ENCODE measurements at regions of chr1 and their contacts with region 1.

Region 1: GRCh38 chr1:239587066-239587465 is 200.7 kb downstream of the CHRM3 start:
- DNase-seq: peak in 32 of 35 experiments; percentile 7 to 63 (median 27)
- ATAC-seq: peak; percentile 77 to 99 (median 92)
- H3K4me3 ChIP-seq: no peak overlapping the region
- H3K4me3 Mint-ChIP-seq: no peak overlapping the region
- H3K27ac ChIP-seq: no peak overlapping the region
- H3K27ac Mint-ChIP-seq: peak overlapping the region in 1 of 2 donors; percentile 73
- H3K4me1 ChIP-seq: peaks cover 0 to 6% of the 10 kb centered on the region in 2 experiments
- H3K4me1 Mint-ChIP-seq: peaks cover 11 to 15% (median 13%) of the 10 kb centered on the region in 3 donors
- H3K27me3 ChIP-seq: no peaks in the 10 kb centered on the region
- H3K27me3 Mint-ChIP-seq: peaks cover 3 to 7% of the 10 kb centered on the region in 2 donors

Region 2: DNA sequence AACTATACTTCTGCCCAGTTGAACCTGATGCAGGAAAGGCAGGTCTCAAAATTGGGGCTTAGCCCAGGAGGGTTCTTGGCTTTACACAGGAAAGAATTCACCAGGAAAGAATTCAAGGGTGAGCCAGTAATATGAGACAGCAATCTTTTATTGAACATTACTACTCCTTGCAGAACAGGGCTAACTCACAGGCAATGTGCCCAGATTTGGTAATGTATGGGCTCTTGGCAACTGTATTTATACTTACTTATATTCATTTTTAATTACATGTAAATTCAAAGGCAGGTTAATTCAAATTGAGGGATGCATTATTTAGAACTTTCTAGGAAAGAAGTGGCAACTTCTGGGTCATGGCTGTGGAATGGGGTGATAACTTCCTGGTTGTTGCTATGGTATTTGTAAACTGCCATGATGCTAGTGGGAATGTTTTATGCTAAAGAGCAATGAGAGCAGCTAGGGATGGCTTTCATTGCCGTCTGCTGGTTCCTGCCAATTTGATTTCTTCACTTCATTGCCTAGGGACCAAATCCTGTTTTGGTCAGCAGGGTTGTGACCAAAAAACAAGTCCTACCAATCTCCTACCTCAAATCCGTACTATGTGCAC is 93.2 kb before region 1 on chr1:
- CTCF ChIA-PET with region 1: no interaction called
- POLR2A ChIA-PET with region 1: no interaction called
- DNase-seq: no peak
- ATAC-seq: no peak
- H3K4me3 ChIP-seq: no peak overlapping the region
- H3K4me3 Mint-ChIP-seq: no peak overlapping the region
- H3K27ac ChIP-seq: no peak overlapping the region
- H3K27ac Mint-ChIP-seq: no peak overlapping the region
- H3K4me1 ChIP-seq: no peaks in the 10 kb centered on the region
- H3K4me1 Mint-ChIP-seq: no peaks in the 10 kb centered on the region
- H3K27me3 ChIP-seq: no peaks in the 10 kb centered on the region
- H3K27me3 Mint-ChIP-seq: no peaks in the 10 kb centered on the region

Region 3: GRCh38 chr1:239619190-239619589 is 32.1 kb after region 1 on chr1:
- CTCF ChIA-PET with region 1: no interaction called
- POLR2A ChIA-PET with region 1: no interaction called
- DNase-seq: no peak
- ATAC-seq: no peak
- H3K4me3 ChIP-seq: no peak overlapping the region
- H3K4me3 Mint-ChIP-seq: no peak overlapping the region
- H3K27ac ChIP-seq: no peak overlapping the region
- H3K27ac Mint-ChIP-seq: no peak overlapping the region
- H3K4me1 ChIP-seq: no peaks in the 10 kb centered on the region
- H3K4me1 Mint-ChIP-seq: no peaks in the 10 kb centered on the region
- H3K27me3 ChIP-seq: no peaks in the 10 kb centered on the region
- H3K27me3 Mint-ChIP-seq: no peaks in the 10 kb centered on the region

Region 4: DNA sequence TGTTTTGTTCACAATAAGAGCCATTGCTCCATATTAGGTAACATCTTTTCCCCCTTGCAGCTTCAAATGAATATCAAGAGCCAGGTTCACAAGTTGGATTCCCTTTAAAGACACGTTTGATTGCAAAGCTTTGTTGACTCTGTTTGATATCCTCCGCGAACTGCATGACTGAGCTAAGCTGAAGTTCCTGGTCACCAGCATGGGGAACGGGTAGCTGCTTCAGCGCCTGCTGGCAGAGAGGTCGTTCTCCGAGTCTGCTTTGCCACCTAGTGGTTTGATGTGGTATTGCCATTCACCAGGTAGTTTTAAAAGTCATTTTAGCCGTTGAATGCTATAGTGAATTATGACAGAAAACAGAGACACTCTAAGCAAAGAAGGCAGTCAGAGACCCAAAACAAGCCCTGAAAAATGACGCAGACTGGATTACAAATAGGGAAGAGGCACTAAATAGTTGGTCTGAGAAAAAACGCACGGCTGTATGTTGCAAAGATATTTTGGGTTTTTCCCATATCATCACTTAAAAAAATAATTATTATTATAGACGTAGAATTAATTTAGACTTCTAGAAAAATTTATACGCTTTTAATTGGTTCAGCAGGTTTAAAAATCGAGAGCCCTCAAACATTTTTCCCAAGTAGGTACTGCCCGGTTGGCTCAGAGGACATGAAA is 311.1 kb after region 1 on chr1:
- CTCF ChIA-PET with region 1: interaction called, 3 to 11 read pairs
- POLR2A ChIA-PET with region 1: no interaction called
- DNase-seq: peak; percentile 31 to 81 (median 61)
- ATAC-seq: peak; percentile 84 to 89 (median 86)
- H3K4me3 ChIP-seq: no peak overlapping the region
- H3K4me3 Mint-ChIP-seq: no peak overlapping the region
- H3K27ac ChIP-seq: no peak overlapping the region
- H3K27ac Mint-ChIP-seq: no peak overlapping the region
- H3K4me1 ChIP-seq: peaks cover 0 to 4% of the 10 kb centered on the region in 2 experiments
- H3K4me1 Mint-ChIP-seq: peaks cover 0 to 5% (median 2%) of the 10 kb centered on the region in 3 donors
- H3K27me3 ChIP-seq: no peaks in the 10 kb centered on the region
- H3K27me3 Mint-ChIP-seq: peaks cover 2 to 6% of the 10 kb centered on the region in 2 donors

Measured in T-cell (primary cell).